IMR-90 (cell line): ENCODE measurements at regions of chr20 and their contacts with region 1.

Region 1: GRCh38 chr20:8853805-8854338 is 215.0 kb upstream of the PLCB4 start:
- DNase-seq: peak; percentile 84
- ATAC-seq: peak; percentile 82
- H3K4me3 ChIP-seq: peak overlapping the region; percentile 2; the same call in 1 of the 2 replicates
- H3K27ac ChIP-seq: peak overlapping the region; percentile 88
- H3K4me1 ChIP-seq: peaks cover 15% of the 10 kb centered on the region
- H3K27me3 ChIP-seq: no peaks in the 10 kb centered on the region
- CTCF ChIP-seq: peak; percentile 87
- POLR2A ChIP-seq: 0 out of 2 replicates have a peak, but pooled peaks have one; percentile 36
- RAD21 ChIP-seq: peak; percentile 90

Region 2: GRCh38 chr20:7346562-7346961 is 1507.3 kb before region 1 on chr20:
- CTCF ChIA-PET with region 1: no interaction called
- POLR2A ChIA-PET with region 1: no interaction called
- dilution Hi-C with region 1: no loop called
- in situ Hi-C with region 1: no loop called
- intact Hi-C with region 1: no loop called
- DNase-seq: no peak
- ATAC-seq: no peak
- H3K4me3 ChIP-seq: no peak overlapping the region
- H3K27ac ChIP-seq: no peak overlapping the region
- H3K4me1 ChIP-seq: no peaks in the 10 kb centered on the region
- H3K27me3 ChIP-seq: no peaks in the 10 kb centered on the region
- CTCF ChIP-seq: no peak
- POLR2A ChIP-seq: no peak
- RAD21 ChIP-seq: no peak

Region 3: DNA sequence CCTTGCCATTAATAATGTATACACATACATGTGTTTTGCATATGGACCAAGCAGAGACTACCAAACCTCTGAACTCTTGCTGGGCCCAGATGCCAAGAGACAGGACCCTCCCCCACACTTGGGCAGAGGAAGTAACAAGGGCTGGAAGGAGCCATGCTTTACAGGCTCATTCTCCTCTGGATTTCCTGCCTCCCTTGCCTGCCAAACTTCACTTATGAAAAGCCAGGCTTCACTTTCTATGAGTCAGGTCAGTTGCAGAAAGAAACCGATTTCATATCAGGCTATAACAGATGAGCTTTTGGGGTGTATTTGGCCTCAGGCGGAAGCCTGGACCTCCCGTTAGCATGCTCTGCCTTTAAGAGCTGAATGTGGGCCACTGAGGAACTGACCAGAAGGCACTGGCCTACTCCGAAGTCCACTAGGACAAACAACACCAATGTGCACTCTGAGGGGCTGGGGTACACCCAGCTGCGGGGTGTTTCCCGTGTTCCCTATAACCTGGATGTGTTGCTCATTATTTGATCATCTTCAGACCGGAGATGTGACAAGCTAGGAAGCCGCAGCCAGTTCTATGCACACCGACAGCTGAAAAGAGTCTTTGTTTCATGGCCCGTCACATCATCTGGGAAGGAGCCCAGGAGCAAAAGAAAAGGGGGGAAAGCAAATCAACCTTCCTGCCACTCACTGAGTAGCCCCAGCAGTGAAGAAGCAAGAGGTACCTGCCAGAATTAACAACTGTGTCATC is 942.1 kb before region 1 on chr20:
- CTCF ChIA-PET with region 1: no interaction called
- POLR2A ChIA-PET with region 1: no interaction called
- dilution Hi-C with region 1: no loop called
- in situ Hi-C with region 1: no loop called
- intact Hi-C with region 1: no loop called
- DNase-seq: no peak
- ATAC-seq: no peak
- H3K4me3 ChIP-seq: no peak overlapping the region
- H3K27ac ChIP-seq: no peak overlapping the region
- H3K4me1 ChIP-seq: no peaks in the 10 kb centered on the region
- H3K27me3 ChIP-seq: peaks cover 2% of the 10 kb centered on the region
- CTCF ChIP-seq: no peak
- POLR2A ChIP-seq: no peak
- RAD21 ChIP-seq: no peak

Region 4: GRCh38 chr20:8790442-8791074 is 63.3 kb before region 1 on chr20:
- CTCF ChIA-PET with region 1: interaction called, 4 read pairs
- POLR2A ChIA-PET with region 1: no interaction called
- dilution Hi-C with region 1: no loop called
- in situ Hi-C with region 1: no loop called
- intact Hi-C with region 1: loop called (anchors 5 kb)
- DNase-seq: peak; percentile 60
- ATAC-seq: peak; percentile 90
- H3K4me3 ChIP-seq: no peak overlapping the region
- H3K27ac ChIP-seq: no peak overlapping the region
- H3K4me1 ChIP-seq: no peaks in the 10 kb centered on the region
- H3K27me3 ChIP-seq: no peaks in the 10 kb centered on the region
- CTCF ChIP-seq: peak; percentile 95
- POLR2A ChIP-seq: no peak
- RAD21 ChIP-seq: peak; percentile 90

Region 5: DNA sequence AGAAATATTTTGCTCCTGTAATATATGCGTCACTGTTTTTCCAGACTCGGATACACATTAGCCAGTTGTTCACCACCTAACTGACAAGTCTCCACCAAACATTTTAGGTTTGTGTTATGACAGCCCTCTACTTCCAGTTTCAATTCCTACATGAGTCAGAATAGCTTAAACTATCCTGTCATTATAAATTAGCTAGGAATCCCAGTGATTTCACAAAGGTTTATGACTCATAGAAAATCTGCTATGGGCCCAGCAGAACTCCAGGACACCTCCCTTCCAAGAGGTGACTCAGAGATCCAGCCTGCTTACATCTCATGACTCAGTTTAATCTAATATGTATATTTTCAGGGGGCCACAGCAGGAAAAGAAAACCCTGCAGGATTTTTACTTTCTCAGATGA is 197.6 kb after region 1 on chr20:
- CTCF ChIA-PET with region 1: interaction called, 5 read pairs
- POLR2A ChIA-PET with region 1: no interaction called
- dilution Hi-C with region 1: no loop called
- in situ Hi-C with region 1: loop called (anchors 5 kb)
- intact Hi-C with region 1: loop called (anchors 5 kb)
- DNase-seq: peak; percentile 99
- ATAC-seq: peak; percentile 91
- H3K4me3 ChIP-seq: no peak overlapping the region
- H3K27ac ChIP-seq: no peak overlapping the region
- H3K4me1 ChIP-seq: peaks cover 25% of the 10 kb centered on the region
- H3K27me3 ChIP-seq: no peaks in the 10 kb centered on the region
- CTCF ChIP-seq: no peak
- POLR2A ChIP-seq: no peak
- RAD21 ChIP-seq: no peak

Region 6: GRCh38 chr20:9269280-9269971 is 415.6 kb after region 1 on chr20:
- CTCF ChIA-PET with region 1: no interaction called
- POLR2A ChIA-PET with region 1: no interaction called
- dilution Hi-C with region 1: no loop called
- in situ Hi-C with region 1: no loop called
- intact Hi-C with region 1: loop called (anchors 5 kb)
- DNase-seq: peak; percentile 71
- ATAC-seq: peak; percentile 88
- H3K4me3 ChIP-seq: no peak overlapping the region
- H3K27ac ChIP-seq: peak overlapping the region; percentile 71; the same call in 1 of the 2 replicates
- H3K4me1 ChIP-seq: peaks cover 14% of the 10 kb centered on the region
- H3K27me3 ChIP-seq: no peaks in the 10 kb centered on the region
- CTCF ChIP-seq: no peak
- POLR2A ChIP-seq: no peak
- RAD21 ChIP-seq: no peak

Region 7: GRCh38 chr20:9392892-9393857 is 539.3 kb after region 1 on chr20:
- CTCF ChIA-PET with region 1: interaction called, 4 read pairs
- POLR2A ChIA-PET with region 1: no interaction called
- dilution Hi-C with region 1: no loop called
- in situ Hi-C with region 1: no loop called
- intact Hi-C with region 1: loop called (anchors 1 kb)
- DNase-seq: peak; percentile 73
- ATAC-seq: peak; percentile 93
- H3K4me3 ChIP-seq: no peak overlapping the region
- H3K27ac ChIP-seq: no peak overlapping the region
- H3K4me1 ChIP-seq: peaks cover 14% of the 10 kb centered on the region
- H3K27me3 ChIP-seq: no peaks in the 10 kb centered on the region
- CTCF ChIP-seq: peak; percentile 92
- POLR2A ChIP-seq: no peak
- RAD21 ChIP-seq: peak; percentile 92